Activated CD4-positive, alpha-beta memory T cell treated with anti-CD3 and anti-CD28 coated beads for 36 hours (primary cell): ENCODE measurements at regions of chr17 and their contacts with region 1.

Region 1: GRCh38 chr17:27332485-27333409 is 38.8 kb downstream of the WSB1 start:
- DNase-seq: peak; percentile 95
- H3K4me3 Mint-ChIP-seq: peak overlapping the region; percentile 72
- H3K27ac Mint-ChIP-seq: peak overlapping the region; percentile 88
- H3K4me1 Mint-ChIP-seq: peaks cover 23% of the 10 kb centered on the region
- H3K27me3 Mint-ChIP-seq: no peaks in the 10 kb centered on the region

Region 2: DNA sequence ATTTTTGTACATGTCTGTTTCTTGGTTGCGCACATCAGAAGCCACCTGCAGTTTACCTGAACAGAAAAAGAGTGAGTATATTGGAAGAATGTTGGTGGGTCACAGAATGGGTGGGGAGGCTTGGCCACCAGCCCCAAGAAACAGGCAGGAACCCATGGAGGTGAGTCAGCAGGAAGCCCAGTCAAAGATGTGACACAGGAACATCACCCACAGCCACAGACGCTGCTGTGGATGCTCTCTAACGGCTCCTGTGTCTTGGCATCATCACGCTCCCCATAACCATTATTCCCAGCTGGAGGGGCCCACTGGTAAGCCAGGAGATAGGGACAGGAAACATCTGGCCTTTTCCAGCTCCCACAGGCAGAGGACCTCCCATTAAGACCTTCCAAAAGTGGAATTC is 132.8 kb before region 1 on chr17:
- CTCF ChIA-PET with region 1: interaction called, 16 read pairs
- POLR2A ChIA-PET with region 1: no interaction called
- intact Hi-C with region 1: no loop called
- DNase-seq: no peak
- H3K4me3 Mint-ChIP-seq: no peak overlapping the region
- H3K27ac Mint-ChIP-seq: no peak overlapping the region
- H3K4me1 Mint-ChIP-seq: no peaks in the 10 kb centered on the region
- H3K27me3 Mint-ChIP-seq: no peaks in the 10 kb centered on the region

Region 3: GRCh38 chr17:27245230-27245696 is 87.5 kb before region 1 on chr17:
- CTCF ChIA-PET with region 1: interaction called, 219 read pairs
- POLR2A ChIA-PET with region 1: interaction called, 9 read pairs
- intact Hi-C with region 1: loop called (anchors 1 kb)
- DNase-seq: peak; percentile 70
- H3K4me3 Mint-ChIP-seq: no peak overlapping the region
- H3K27ac Mint-ChIP-seq: no peak overlapping the region
- H3K4me1 Mint-ChIP-seq: peaks cover 6% of the 10 kb centered on the region
- H3K27me3 Mint-ChIP-seq: peaks cover 8% of the 10 kb centered on the region

Region 4: GRCh38 chr17:27293898-27294688 is 38.7 kb before region 1 on chr17 and contains the start of gene WSB1:
- CTCF ChIA-PET with region 1: interaction called, 29 read pairs
- POLR2A ChIA-PET with region 1: interaction called, 12 read pairs
- intact Hi-C with region 1: loop called (anchors 1 kb)
- DNase-seq: peak; percentile 94
- H3K4me3 Mint-ChIP-seq: peak within 1 kb of the TSS; percentile 99
- H3K27ac Mint-ChIP-seq: peak within 1 kb of the TSS; percentile 100
- H3K4me1 Mint-ChIP-seq: peaks cover 39% of the 10 kb centered on the region
- H3K27me3 Mint-ChIP-seq: no peaks in the 10 kb centered on the region
- total RNA-seq, gene WSB1: 135 to 147 TPM

Region 5: DNA sequence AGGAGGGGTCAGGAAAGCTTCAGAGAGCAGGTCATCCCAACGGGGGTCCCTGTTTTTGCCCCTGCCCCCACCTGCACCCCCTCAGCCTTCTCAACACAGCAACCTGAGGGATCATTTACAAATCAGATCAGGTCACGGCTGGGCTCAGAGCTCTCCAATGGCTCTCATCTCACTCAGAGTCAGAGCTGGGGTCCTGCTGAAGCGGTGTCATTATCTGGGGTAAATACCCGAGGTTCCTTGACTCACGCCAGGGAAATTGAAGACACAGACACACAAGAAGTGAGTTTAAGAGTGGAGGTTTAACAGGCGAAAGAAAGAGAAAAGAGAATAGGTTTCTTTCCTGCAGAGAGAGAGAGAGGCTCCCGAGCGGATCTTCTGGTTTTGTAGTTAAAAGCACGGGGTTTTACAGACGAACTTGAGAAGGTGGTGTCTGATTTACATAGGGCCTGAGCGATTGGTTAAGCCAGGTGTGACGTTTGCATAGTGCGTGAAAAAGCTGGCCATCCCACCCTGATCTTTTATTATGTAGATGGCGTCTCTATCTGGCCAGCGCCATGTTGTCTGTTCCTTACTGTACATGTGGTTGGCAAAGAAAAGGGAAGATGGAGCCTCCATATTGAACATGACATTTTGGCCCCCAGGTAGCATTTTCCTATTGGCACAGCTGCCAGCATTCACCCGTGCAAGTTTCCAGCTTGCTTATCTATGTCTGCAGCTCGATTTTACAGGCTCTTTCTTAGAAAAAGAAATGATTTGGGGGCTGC is 12.6 kb after region 1 on chr17:
- CTCF ChIA-PET with region 1: interaction called, 13 read pairs
- POLR2A ChIA-PET with region 1: interaction called, 3 read pairs
- intact Hi-C with region 1: no loop called
- DNase-seq: no peak
- H3K4me3 Mint-ChIP-seq: no peak overlapping the region
- H3K27ac Mint-ChIP-seq: no peak overlapping the region
- H3K4me1 Mint-ChIP-seq: peaks cover 8% of the 10 kb centered on the region
- H3K27me3 Mint-ChIP-seq: peaks cover 3% of the 10 kb centered on the region

Region 6: DNA sequence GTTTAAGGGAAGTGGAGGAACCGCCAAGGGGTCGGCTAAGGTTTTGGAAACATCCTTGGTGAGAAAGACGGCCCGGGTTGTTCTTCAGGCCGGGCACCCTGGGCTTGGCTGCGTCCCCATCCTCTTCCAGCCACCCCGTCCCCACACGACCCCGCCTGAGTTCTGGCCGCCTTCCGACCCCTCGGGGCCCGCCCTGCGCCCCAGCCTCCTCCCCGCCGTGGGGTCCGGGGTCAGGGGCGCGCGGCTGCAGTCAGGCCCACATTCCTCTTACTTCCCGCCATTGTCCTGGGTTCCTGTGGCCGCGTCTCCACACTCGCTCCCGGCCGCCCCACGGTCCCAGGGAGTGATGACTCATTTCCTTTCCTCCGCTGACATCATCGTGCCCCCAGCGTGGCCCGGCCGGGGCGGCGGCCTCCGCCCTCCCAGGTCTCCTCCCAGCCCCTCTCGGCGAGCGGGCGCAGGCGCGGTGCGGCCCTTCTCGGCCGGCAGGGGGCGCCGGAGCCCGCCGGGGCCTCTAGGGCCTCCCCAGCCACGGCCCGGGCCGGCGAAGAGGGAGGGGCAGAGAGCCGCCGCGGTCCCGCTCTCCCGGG is 20.8 kb after region 1 on chr17:
- CTCF ChIA-PET with region 1: interaction called, 9 read pairs
- POLR2A ChIA-PET with region 1: no interaction called
- intact Hi-C with region 1: loop called (anchors 2 kb)
- DNase-seq: peak; percentile 93
- H3K4me3 Mint-ChIP-seq: peak overlapping the region; percentile 78
- H3K27ac Mint-ChIP-seq: peak overlapping the region; percentile 86
- H3K4me1 Mint-ChIP-seq: peaks cover 22% of the 10 kb centered on the region
- H3K27me3 Mint-ChIP-seq: no peaks in the 10 kb centered on the region

Region 7: DNA sequence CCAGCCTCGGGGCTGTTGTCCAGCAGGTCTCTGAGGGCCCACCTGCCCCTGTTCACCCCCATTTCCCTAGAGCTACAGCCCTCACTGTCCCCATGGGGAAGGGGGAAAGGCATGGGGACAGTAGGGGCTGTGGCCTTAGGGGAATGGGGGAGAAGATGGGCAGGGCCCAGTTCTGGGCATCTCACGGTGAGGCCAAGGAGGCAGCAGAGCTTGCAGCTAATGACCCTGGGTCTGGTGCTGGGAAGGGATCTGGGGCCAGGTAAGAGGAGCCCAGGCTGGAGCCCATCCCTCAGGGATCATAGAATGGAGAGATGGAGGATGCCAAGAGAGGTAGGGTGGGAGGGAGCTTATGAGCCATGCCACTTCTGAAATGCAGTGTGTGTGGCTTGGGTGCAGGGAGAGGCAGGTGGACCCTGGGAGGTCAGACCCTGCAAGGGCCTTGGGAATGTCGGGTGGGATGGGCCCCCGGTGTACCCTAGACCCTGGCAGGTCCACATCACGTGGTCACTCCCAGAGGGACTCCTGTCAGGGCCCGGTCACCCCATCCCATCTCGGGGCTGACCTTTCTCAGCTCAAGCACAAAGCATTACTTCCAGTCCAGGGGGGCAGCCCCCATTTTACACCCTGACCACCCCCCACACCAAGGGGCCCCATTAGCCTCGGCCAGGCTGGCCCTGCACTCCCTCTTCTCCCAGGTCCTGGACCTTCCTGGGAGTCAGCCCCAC is 87.6 kb after region 1 on chr17:
- CTCF ChIA-PET with region 1: no interaction called
- POLR2A ChIA-PET with region 1: no interaction called
- intact Hi-C with region 1: no loop called
- DNase-seq: no peak
- H3K4me3 Mint-ChIP-seq: no peak overlapping the region
- H3K27ac Mint-ChIP-seq: no peak overlapping the region
- H3K4me1 Mint-ChIP-seq: no peaks in the 10 kb centered on the region
- H3K27me3 Mint-ChIP-seq: no peaks in the 10 kb centered on the region